Activated naive CD4-positive, alpha-beta T cell treated with anti-CD3 and anti-CD28 coated beads for 36 hours (primary cell): ENCODE measurements at regions of chr10 and their contacts with region 1.

Region 1: GRCh38 chr10:5623081-5623748 is 43.2 kb downstream of the ASB13 start:
- DNase-seq: peak; percentile 91
- H3K4me3 Mint-ChIP-seq: no peak overlapping the region
- H3K27ac Mint-ChIP-seq: no peak overlapping the region
- H3K4me1 Mint-ChIP-seq: peaks cover 13% of the 10 kb centered on the region
- H3K27me3 Mint-ChIP-seq: no peaks in the 10 kb centered on the region

Region 2: GRCh38 chr10:5434017-5434753 is 189.0 kb before region 1 on chr10:
- CTCF ChIA-PET with region 1: interaction called, 244 read pairs
- intact Hi-C with region 1: no loop called
- DNase-seq: no peak
- H3K4me3 Mint-ChIP-seq: no peak overlapping the region
- H3K27ac Mint-ChIP-seq: no peak overlapping the region
- H3K4me1 Mint-ChIP-seq: peaks cover 8% of the 10 kb centered on the region
- H3K27me3 Mint-ChIP-seq: no peaks in the 10 kb centered on the region

Region 3: DNA sequence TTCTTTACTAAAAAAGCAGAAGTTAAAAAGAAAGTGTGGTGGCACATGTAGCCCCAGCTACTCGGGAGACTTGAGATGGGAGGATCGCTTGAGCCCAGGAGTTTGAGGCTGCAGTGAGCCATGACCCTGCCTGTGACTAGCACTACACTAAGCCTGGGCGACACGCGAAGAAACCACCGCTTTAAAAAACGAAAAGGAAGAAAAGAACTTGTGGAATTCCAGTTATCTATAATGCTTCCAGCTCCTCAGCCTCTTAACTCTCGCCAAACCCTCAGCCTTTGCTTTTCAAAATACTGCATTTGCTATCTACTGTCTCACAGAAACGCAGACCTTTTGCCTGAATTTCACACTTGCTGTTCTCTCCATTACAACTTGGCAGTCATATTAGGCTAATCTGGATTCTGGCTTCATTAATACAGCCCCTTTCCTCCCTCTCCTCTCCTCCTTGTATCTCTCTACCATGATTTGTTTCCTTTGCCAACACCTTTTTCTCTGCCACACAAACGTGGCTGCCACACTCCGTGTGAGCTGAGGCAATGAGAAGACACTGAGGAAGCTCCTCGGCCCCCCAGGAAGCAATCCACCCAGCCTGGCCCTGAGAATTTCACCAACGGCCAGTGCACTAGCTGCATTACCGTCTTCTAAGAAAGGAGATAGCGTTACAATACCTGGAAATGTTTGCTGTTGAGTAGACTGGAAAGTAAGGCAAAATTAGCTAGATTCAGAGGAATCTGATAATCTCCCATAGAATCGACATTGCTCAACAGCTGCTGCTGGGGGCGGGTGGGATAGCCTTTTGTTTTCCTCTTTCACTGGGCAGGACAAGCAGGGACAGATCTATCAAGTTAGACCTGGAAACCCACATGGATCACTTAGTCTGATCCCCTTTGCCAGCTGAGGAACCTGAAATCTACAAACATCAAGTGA is 161.0 kb before region 1 on chr10:
- CTCF ChIA-PET with region 1: interaction called, 19 read pairs
- intact Hi-C with region 1: no loop called
- DNase-seq: no peak
- H3K4me3 Mint-ChIP-seq: no peak overlapping the region
- H3K27ac Mint-ChIP-seq: no peak overlapping the region
- H3K4me1 Mint-ChIP-seq: peaks cover 10% of the 10 kb centered on the region
- H3K27me3 Mint-ChIP-seq: no peaks in the 10 kb centered on the region

Region 4: DNA sequence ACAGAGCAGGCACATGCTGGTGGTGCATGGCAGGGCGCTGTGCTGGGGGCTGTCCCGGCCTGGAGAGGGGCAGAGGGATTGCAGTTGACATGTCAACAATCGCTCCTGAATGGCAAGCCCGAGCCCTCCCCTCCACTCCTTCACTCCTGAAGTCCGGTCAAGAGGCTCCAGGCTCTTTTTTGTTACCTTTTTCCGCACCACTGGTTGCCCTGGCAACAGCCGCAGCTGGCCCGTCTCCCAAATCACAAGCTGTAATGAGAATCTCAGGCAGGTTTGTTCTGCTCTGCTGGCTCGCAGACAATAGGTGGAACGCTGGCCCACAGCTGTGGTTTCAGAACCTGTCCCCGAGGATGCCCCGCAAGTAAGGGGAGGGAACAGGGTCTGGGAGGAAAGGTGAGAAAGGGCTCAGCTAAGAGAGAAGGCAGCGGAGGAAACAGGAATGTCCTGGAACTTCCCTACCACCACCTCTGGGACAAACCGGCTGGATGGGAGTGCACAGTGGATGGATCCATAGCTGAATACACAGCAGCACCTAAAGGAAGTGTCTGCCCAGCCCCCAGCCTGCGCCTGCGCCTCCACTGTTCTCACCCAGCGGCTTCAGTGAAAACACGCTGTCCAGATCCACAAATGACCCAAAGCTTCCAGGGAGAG is 39.6 kb before region 1 on chr10:
- CTCF ChIA-PET with region 1: interaction called, 11 read pairs
- intact Hi-C with region 1: no loop called
- DNase-seq: no peak
- H3K4me3 Mint-ChIP-seq: no peak overlapping the region
- H3K27ac Mint-ChIP-seq: no peak overlapping the region
- H3K4me1 Mint-ChIP-seq: no peaks in the 10 kb centered on the region
- H3K27me3 Mint-ChIP-seq: no peaks in the 10 kb centered on the region

Region 5: GRCh38 chr10:6171881-6172695 is 548.9 kb after region 1 on chr10:
- CTCF ChIA-PET with region 1: no interaction called
- intact Hi-C with region 1: no loop called
- DNase-seq: peak; percentile 82
- H3K4me3 Mint-ChIP-seq: no peak overlapping the region
- H3K27ac Mint-ChIP-seq: peak overlapping the region; percentile 70
- H3K4me1 Mint-ChIP-seq: peaks cover 86% of the 10 kb centered on the region
- H3K27me3 Mint-ChIP-seq: no peaks in the 10 kb centered on the region